ENCODE measurements at regions of chr1 and their contacts with region 1.

Region 1: GRCh38 chr1:114716304-114717170 is at the start of gene NRAS:
- DNase-seq: peak; percentile 97
- ATAC-seq: peak; percentile 94
- H3K4me3 Mint-ChIP-seq: peak within 1 kb of the TSS; percentile 98
- H3K27ac Mint-ChIP-seq: peak within 1 kb of the TSS; percentile 99
- H3K4me1 Mint-ChIP-seq: peaks cover 27% of the 10 kb centered on the region
- H3K27me3 Mint-ChIP-seq: no peaks in the 10 kb centered on the region
- CTCF ChIP-seq: no peak
- total RNA-seq, gene NRAS: 49.1 to 49.9 TPM

Region 2: GRCh38 chr1:114581335-114582287 is 134.9 kb before region 1 on chr1 and contains the start of gene BCAS2:
- CTCF ChIA-PET with region 1: interaction called, 4 read pairs
- POLR2A ChIA-PET with region 1: interaction called, 7 read pairs
- intact Hi-C with region 1: loop called (anchors 1 kb)
- DNase-seq: peak; percentile 99
- ATAC-seq: peak; percentile 98
- H3K4me3 Mint-ChIP-seq: peak within 1 kb of the TSS; percentile 99
- H3K27ac Mint-ChIP-seq: peak within 1 kb of the TSS; percentile 98
- H3K4me1 Mint-ChIP-seq: peaks cover 26% of the 10 kb centered on the region
- H3K27me3 Mint-ChIP-seq: no peaks in the 10 kb centered on the region
- CTCF ChIP-seq: no peak
- total RNA-seq, gene BCAS2: 42.4 to 46.4 TPM

Region 3: DNA sequence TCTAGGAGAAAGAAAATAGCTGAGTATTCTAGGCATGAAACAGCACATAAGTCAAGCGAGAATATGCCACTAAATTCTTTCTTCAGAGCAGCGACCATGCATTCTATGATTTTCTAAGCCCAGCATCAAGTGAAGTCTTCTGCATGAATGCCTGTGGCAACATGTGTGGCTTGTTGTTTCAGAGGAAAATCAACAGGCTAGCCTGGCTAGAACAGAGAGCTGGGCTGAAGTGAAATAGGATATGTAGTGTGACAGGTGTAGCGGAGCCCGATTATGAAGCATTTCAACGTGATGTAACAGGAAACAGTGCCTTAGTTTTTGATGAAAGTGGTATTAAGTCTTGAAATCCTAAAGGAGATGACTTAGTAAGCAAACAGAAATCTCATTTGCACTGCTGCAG is 34.2 kb after region 1 on chr1:
- CTCF ChIA-PET with region 1: interaction called, 3 read pairs
- POLR2A ChIA-PET with region 1: interaction called, 29 read pairs
- intact Hi-C with region 1: loop called (anchors 5 kb)
- DNase-seq: no peak
- ATAC-seq: no peak
- H3K4me3 Mint-ChIP-seq: no peak overlapping the region
- H3K27ac Mint-ChIP-seq: peak overlapping the region; percentile 56
- H3K4me1 Mint-ChIP-seq: peaks cover 88% of the 10 kb centered on the region
- H3K27me3 Mint-ChIP-seq: no peaks in the 10 kb centered on the region
- CTCF ChIP-seq: no peak

Measured in activated CD8-positive, alpha-beta T cell treated with anti-CD3 and anti-CD28 coated beads for 36 hours (primary cell).